ENCODE measurements at regions of chr11 and their contacts with region 1.

Region 1: DNA sequence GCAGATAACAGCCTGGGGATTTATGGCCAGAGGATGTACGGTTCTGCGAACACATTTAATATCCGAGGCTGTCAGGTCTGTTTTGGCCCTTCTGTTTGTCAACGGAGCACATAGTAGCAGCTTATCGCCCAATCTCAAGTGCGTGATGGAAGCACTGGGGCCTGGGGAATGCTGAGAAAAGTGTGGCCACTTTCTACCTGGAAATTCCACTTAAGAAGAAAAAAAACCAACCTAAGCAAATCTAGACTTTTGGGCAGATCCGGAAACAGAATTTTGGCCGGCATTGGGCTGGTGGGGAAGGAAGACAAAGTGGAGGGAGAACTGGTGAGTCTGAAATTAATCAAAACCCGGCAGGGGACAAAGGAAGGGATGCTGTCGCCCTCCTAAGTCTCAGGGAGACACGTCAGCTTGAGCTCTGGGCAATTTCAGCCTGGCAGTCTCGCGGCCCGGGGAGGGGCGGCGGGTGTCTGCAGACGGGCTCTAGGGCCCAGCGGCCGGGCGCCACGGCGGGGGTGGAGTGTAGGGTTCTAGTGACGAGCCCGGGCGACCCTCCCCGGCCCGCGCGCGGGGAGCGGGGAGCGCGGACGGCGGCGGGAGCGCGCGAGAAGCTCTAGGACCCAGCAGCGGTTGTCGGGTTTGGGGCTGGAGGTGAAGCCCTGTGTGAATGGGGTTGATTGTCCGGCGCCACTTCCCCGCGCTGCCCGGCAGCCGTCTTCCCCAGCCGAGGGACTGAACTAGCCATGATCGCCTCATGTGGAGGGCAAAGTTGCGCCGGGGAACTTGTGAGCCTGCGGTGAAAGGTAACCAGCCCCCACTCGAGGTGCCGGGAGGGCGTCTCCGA is at the start of gene AMOTL1:
- DNase-seq: peak; percentile 89
- H3K4me3 ChIP-seq: peak within 1 kb of the TSS; percentile 62 to 80
- H3K27ac ChIP-seq: peak within 1 kb of the TSS; percentile 92 to 94
- H3K4me1 ChIP-seq: peaks cover 4% of the 10 kb centered on the region
- H3K27me3 ChIP-seq: no peaks in the 10 kb centered on the region
- CTCF ChIP-seq: no peak
- POLR2A ChIP-seq: peak; percentile 73
- total RNA-seq, gene AMOTL1: 49.2 to 67.2 TPM

Region 2: GRCh38 chr11:94543695-94544645 is 224.0 kb before region 1 on chr11 and contains the start of gene FUT4:
- intact Hi-C with region 1: loop called (anchors 10 kb)
- DNase-seq: peak; percentile 88
- H3K4me3 ChIP-seq: peak within 1 kb of the TSS; percentile 58 to 63
- H3K27ac ChIP-seq: peak within 1 kb of the TSS; percentile 94 to 96
- H3K4me1 ChIP-seq: no peaks in the 10 kb centered on the region
- H3K27me3 ChIP-seq: no peaks in the 10 kb centered on the region
- CTCF ChIP-seq: peak in 1 of 4 experiments; percentile 12
- POLR2A ChIP-seq: peak; percentile 40
- total RNA-seq, gene FUT4: 5.2 to 6.5 TPM

Region 3: GRCh38 chr11:94593030-94593429 is 175.0 kb before region 1 on chr11:
- intact Hi-C with region 1: no loop called
- DNase-seq: no peak
- H3K4me3 ChIP-seq: no peak overlapping the region
- H3K27ac ChIP-seq: no peak overlapping the region
- H3K4me1 ChIP-seq: no peaks in the 10 kb centered on the region
- H3K27me3 ChIP-seq: no peaks in the 10 kb centered on the region
- CTCF ChIP-seq: no peak
- POLR2A ChIP-seq: no peak

Region 4: GRCh38 chr11:94623120-94623735 is 144.8 kb before region 1 on chr11:
- intact Hi-C with region 1: loop called (anchors 10 kb)
- DNase-seq: peak; percentile 70
- H3K4me3 ChIP-seq: no peak overlapping the region
- H3K27ac ChIP-seq: no peak overlapping the region
- H3K4me1 ChIP-seq: no peaks in the 10 kb centered on the region
- H3K27me3 ChIP-seq: no peaks in the 10 kb centered on the region
- CTCF ChIP-seq: peak; percentile 75 to 94 (median 90)
- POLR2A ChIP-seq: no peak

Region 5: GRCh38 chr11:94794287-94795168 is 26.5 kb after region 1 on chr11:
- intact Hi-C with region 1: no loop called
- DNase-seq: peak; percentile 69
- H3K4me3 ChIP-seq: no peak overlapping the region
- H3K27ac ChIP-seq: peak overlapping the region; percentile 21 to 48
- H3K4me1 ChIP-seq: no peaks in the 10 kb centered on the region
- H3K27me3 ChIP-seq: no peaks in the 10 kb centered on the region
- CTCF ChIP-seq: no peak
- POLR2A ChIP-seq: no peak

Region 6: DNA sequence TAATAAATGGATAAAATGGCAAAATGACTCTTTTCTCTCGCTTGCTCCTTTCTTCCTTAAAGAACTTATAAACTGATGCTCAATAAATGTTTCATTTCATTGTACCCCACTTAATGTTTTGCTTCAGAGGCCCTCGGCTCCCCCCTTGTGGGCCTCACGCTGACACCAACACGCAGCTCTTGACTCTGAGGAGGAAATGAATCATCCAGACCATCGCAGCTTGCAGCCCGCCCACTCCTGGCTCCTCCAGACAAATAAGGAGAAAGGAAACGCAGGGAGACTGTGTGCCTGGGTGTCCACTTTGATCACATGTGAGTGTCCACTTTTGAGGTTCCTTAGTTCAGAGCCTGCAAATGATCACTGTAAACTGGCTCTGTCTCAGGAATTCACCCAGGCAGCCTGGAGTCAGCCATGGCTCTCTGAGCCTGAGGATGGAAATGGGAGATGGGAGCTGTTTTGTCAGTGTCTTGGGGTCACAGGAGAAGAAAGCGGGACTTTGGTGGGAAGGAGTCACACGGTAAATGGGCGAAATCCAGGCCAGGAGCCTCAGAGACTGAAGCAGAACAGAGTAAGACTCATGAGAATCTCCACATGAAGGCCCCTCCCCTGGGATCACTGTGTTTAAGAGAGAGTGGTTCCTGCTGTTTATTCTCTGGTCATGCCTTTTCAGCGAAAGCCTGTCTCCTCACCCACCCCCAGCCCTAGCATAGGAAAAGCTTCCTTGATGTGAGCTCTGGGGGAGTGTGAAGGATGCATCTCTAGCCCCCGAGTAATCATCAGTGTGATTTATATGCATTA is 108.9 kb after region 1 on chr11:
- intact Hi-C with region 1: loop called (anchors 10 kb)
- DNase-seq: peak; percentile 48
- H3K4me3 ChIP-seq: no peak overlapping the region
- H3K27ac ChIP-seq: peak overlapping the region; percentile 58 to 67
- H3K4me1 ChIP-seq: no peaks in the 10 kb centered on the region
- H3K27me3 ChIP-seq: no peaks in the 10 kb centered on the region
- CTCF ChIP-seq: peak in 1 of 4 experiments; percentile 32
- POLR2A ChIP-seq: no peak

Region 7: GRCh38 chr11:94973099-94973968 is 205.4 kb after region 1 on chr11 and contains the starts of genes CWC15 and KDM4D:
- intact Hi-C with region 1: loop called (anchors 10 kb)
- DNase-seq: peak; percentile 94
- H3K4me3 ChIP-seq: peak within 1 kb of the TSS; percentile 69 to 85
- H3K27ac ChIP-seq: peak within 1 kb of the TSS; percentile 73 to 78
- H3K4me1 ChIP-seq: no peaks in the 10 kb centered on the region
- H3K27me3 ChIP-seq: no peaks in the 10 kb centered on the region
- CTCF ChIP-seq: peak in 1 of 4 experiments; percentile 15
- POLR2A ChIP-seq: peak; percentile 38
- total RNA-seq, gene CWC15: 33.6 to 43.8 TPM
- total RNA-seq, gene KDM4D: 2.6 to 9.9 TPM

Region 8: GRCh38 chr11:95119374-95120060 is 351.5 kb after region 1 on chr11:
- intact Hi-C with region 1: no loop called
- DNase-seq: peak; percentile 70
- H3K4me3 ChIP-seq: no peak overlapping the region
- H3K27ac ChIP-seq: peak overlapping the region in 1 of 2 donors; percentile 55
- H3K4me1 ChIP-seq: no peaks in the 10 kb centered on the region
- H3K27me3 ChIP-seq: no peaks in the 10 kb centered on the region
- CTCF ChIP-seq: no peak
- POLR2A ChIP-seq: no peak

Measured in prostate gland (tissue), 2 donors.